Activated B cell treated with CpG ODN at 0.5 μM for 24 hours (primary cell): ENCODE measurements at regions of chr12 and their contacts with region 1.

Region 1: DNA sequence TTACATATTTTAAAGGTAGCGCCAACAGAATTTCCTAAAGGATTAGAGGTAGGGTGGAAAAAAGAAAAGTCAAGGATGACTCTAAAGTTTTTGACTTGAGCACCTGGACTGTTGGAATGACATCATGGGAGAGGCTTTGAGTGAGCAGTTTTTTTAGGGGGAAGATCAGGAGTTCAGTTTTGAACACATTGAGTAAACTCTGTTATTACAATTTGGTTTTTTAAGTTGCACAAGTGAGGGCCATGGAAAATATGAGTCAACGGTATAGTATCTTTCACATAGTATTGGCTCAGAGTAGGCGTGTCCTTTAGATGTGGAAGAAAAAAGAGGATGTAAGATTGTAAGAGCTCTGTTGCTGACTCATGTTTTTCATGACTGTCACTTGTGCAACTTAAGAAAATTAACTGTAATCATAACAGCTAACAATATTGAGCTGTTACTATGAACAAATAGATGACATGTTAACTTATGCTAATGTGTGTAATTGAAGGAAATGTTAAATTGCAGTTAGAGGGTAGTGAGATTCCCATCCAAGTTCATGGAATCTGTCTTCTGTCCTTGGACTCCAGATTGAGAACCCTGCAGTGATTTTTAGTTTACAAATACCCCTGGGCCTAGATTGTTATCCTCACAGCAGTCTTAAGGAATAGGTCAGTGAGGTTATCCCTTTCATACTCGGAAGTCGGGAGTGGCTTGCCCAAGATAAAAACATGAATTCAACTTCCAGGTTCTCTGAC is 48.1 kb upstream of the ATP2B1 start:
- DNase-seq: no peak
- ATAC-seq: peak; percentile 74
- H3K4me3 Mint-ChIP-seq: peak overlapping the region; percentile 25
- H3K27ac Mint-ChIP-seq: peak overlapping the region; percentile 96
- H3K4me1 Mint-ChIP-seq: peaks cover 62% of the 10 kb centered on the region
- H3K27me3 Mint-ChIP-seq: no peaks in the 10 kb centered on the region
- CTCF ChIP-seq: no peak

Region 2: DNA sequence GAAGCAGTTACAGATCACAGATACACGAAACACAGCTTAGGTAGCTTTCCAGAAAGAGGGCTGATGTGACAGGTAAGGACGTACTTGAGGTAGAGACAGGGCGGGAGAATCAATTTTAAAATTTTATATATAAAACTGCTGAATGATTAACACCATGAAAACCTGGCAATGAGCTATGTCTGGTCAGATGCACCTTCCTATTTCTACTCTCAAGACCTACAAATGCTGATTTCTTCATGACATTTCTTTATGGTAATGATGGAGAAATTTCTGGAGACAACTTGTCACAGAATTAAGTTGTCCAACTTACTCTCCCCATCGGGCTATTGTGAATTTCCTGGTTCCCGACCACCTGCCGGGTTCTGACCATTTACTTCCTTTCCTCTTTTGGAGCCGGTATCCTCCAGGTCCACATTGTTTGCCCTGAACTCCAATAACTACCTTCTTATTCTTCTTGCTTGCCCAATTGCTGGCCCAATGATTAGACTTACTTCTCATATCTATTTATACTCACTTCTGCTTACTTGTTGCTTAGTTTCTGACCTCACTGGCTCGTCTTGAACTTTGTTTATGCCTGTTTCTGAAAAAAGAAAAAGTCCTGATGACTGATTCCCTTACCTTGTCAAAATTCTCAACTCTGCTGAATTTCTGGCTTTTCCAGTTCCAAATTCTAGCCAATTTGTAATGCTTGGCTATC is 35.3 kb before region 1 on chr12:
- CTCF ChIA-PET with region 1: no interaction called
- POLR2A ChIA-PET with region 1: no interaction called
- intact Hi-C with region 1: loop called (anchors 1 kb)
- DNase-seq: no peak
- ATAC-seq: peak; percentile 86
- H3K4me3 Mint-ChIP-seq: peak overlapping the region; percentile 72
- H3K27ac Mint-ChIP-seq: peak overlapping the region; percentile 95
- H3K4me1 Mint-ChIP-seq: peaks cover 39% of the 10 kb centered on the region
- H3K27me3 Mint-ChIP-seq: no peaks in the 10 kb centered on the region
- CTCF ChIP-seq: no peak

Region 3: DNA sequence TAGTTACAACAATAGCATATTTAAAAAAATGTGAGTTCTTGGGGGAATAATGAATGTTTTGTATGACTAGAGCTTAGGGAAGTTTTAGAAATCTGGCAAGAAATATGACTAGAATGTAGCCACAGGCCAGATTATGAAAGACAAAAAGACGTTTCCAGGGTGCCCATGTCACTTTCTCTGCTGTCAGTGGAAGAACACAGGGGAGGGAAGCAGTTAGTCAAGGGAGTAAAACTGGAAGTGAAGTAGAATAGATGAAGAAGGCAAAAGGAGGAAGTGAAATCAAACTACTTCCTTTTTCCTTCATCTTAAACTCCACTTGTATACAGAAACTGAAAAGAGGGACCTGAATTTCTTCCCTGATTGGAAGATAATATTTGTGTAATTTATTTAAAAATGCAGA is 33.1 kb after region 1 on chr12:
- CTCF ChIA-PET with region 1: no interaction called
- POLR2A ChIA-PET with region 1: no interaction called
- intact Hi-C with region 1: loop called (anchors 2 kb)
- DNase-seq: no peak
- ATAC-seq: peak; percentile 97
- H3K4me3 Mint-ChIP-seq: peak overlapping the region; percentile 67
- H3K27ac Mint-ChIP-seq: peak overlapping the region; percentile 87
- H3K4me1 Mint-ChIP-seq: peaks cover 20% of the 10 kb centered on the region
- H3K27me3 Mint-ChIP-seq: no peaks in the 10 kb centered on the region
- CTCF ChIP-seq: no peak

Region 4: DNA sequence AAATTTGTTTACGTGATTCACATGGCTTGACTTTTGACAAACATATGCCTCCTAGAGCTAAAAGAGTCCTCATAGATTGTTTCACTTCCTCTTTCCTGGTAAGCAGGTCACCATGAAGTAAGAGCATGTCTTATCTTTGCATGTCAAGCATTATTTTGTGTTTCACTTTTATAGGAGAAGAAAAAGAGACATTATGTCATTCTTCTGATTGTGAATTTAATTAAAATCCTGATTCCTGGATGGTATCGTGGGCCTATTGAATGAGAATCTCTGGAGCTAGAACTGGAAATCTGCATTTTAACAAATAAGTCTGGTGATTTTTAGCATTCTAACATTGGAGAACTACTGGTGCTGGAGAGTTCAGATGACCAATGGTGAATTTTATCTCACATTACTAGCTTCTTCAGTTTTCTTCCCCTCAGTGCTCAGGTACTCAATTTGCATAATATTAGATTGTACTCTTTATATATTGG is 170.5 kb after region 1 on chr12:
- CTCF ChIA-PET with region 1: no interaction called
- POLR2A ChIA-PET with region 1: interaction called, 3 read pairs
- intact Hi-C with region 1: loop called (anchors 1 kb)
- DNase-seq: no peak
- ATAC-seq: peak; percentile 90
- H3K4me3 Mint-ChIP-seq: peak overlapping the region; percentile 89
- H3K27ac Mint-ChIP-seq: peak overlapping the region; percentile 98
- H3K4me1 Mint-ChIP-seq: peaks cover 69% of the 10 kb centered on the region
- H3K27me3 Mint-ChIP-seq: no peaks in the 10 kb centered on the region
- CTCF ChIP-seq: no peak

Region 5: GRCh38 chr12:90253674-90254181 is 497.0 kb after region 1 on chr12:
- CTCF ChIA-PET with region 1: no interaction called
- POLR2A ChIA-PET with region 1: no interaction called
- intact Hi-C with region 1: loop called (anchors 1 kb)
- DNase-seq: peak; percentile 40
- ATAC-seq: peak; percentile 94
- H3K4me3 Mint-ChIP-seq: peak overlapping the region; percentile 64
- H3K27ac Mint-ChIP-seq: peak overlapping the region; percentile 87
- H3K4me1 Mint-ChIP-seq: peaks cover 26% of the 10 kb centered on the region
- H3K27me3 Mint-ChIP-seq: no peaks in the 10 kb centered on the region
- CTCF ChIP-seq: no peak